PC-9 (cell line): ENCODE measurements at regions of chr9 and their contacts with region 1.

Region 1: DNA sequence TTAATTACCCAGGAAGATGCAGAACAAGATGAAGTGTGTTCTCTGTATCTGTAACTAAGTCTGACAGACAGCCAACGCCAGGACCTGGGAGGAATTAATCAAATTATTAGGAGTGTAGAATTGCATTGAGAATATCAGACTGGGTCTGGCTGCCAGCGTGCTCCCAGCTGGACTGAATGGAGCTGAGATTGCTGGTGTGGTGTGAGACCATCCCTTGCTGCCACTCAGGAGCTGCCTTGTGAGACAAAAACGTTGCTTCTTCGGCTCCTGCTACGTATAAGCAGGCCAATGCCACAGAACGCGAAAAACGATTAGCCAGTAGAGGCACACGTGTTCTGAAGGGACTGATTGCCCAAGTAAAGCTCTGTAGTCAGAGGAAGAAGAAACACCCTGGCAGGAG is 66.8 kb downstream of the AMBP start:
- DNase-seq: no peak
- H3K4me3 ChIP-seq: no peak overlapping the region
- H3K27ac ChIP-seq: no peak overlapping the region
- H3K4me1 ChIP-seq: no peaks in the 10 kb centered on the region
- H3K27me3 ChIP-seq: peaks cover 77% of the 10 kb centered on the region
- CTCF ChIP-seq: no peak

Region 2: DNA sequence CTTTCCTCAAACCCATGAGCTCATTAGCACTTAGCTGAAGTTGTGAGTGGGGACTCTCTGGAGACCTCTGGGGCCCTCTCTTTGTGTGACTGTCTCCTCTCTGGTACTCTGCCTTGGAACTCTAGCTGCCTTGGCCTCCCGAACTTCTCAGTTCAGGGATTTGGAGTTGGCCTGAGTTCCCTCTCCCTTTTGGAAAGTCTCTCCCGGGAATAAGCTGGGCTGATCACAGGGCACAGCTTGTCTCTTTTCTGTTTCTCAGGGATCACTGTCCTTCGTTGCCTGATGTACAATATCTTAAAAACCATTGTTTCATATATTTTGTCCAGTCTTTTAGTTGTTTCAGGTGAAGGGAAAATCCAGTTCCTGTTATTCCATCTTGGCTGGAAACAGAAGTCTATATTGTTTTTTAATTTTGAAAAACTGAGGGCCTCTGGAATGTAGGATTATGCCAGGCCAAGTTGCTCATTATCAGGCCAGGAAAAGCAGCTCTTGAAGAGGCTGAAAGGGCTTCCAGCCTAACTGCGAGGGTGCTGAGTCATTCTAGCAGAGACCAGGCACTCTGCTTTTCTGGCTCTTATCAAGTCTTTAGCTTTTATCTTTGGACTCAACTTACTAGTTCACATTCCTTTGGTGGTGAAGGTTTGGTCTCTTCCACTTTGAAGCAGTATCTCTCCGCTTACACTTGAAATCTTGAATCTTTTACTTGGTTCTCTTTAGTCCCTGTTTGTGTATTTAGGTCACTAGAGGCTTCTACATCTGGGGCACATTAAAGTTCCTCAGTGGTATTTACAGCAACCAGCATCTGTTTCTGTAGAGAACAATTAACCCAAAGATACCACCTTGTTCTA is 556.2 kb before region 1 on chr9:
- CTCF ChIA-PET with region 1: interaction called, 19 read pairs
- POLR2A ChIA-PET with region 1: no interaction called
- intact Hi-C with region 1: no loop called
- DNase-seq: peak; percentile 68 to 79
- H3K4me3 ChIP-seq: no peak overlapping the region
- H3K27ac ChIP-seq: peak overlapping the region; percentile 85
- H3K4me1 ChIP-seq: peaks cover 28% of the 10 kb centered on the region
- H3K27me3 ChIP-seq: no peaks in the 10 kb centered on the region
- CTCF ChIP-seq: no peak